ENCODE measurements at regions of chr20 and their contacts with region 1.

Region 1: DNA sequence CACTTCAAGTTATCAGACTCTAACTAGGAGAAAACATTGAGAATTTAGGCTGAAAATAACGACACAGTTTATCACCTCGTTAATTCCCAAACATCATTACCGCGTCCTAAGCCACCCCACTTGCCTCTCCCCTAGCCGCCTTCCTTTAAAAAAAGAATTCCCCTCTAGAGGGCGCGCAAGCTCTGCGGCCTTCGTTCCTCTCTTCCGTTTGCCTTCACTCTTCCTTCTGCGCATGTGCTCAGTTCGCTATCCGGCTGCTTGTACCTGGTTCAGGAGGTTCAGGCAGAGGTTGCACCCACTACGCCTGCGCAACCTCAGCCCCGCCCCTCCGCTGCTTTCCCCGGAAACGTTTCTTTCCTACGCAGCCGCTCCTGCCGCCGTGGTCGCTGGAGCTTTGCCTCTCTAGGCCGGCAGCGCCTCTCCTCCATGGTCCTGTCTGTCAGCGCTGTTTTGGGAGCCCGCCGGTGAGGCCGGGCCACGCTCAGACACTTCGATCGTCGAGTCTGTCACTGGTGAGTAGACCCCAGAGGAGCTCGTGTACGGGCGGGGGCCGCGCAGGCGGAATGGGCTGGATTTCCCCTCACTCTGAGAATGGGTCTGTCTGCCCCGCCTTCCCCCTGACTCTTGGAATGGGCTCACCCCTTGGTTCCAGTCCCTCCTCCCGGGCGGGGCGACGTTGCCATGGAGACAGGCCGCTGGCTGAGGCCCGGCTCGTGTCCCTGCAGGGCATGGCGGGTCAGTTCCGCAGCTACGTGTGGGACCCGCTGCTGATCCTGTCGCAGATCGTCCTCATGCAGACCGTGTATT is at the start of gene SYS1:
- DNase-seq: peak; percentile 98 to 99 (median 98)
- H3K4me3 ChIP-seq: peak within 1 kb of the TSS; percentile 59 to 92 (median 85)
- H3K27ac ChIP-seq: peak within 1 kb of the TSS; percentile 89 to 95
- H3K4me1 ChIP-seq: peaks cover 15 to 58% (median 44%) of the 10 kb centered on the region in 4 experiments
- H3K27me3 ChIP-seq: no peaks in the 10 kb centered on the region

Region 2: GRCh38 chr20:45347936-45348778 is 14.8 kb before region 1 on chr20 and contains the start of gene SDC4:
- CTCF ChIA-PET with region 1: interaction called, 27 read pairs
- POLR2A ChIA-PET with region 1: interaction called, 16 read pairs
- DNase-seq: peak; percentile 35 to 62 (median 57)
- H3K4me3 ChIP-seq: peak within 1 kb of the TSS; percentile 5 to 81 (median 59)
- H3K27ac ChIP-seq: peak within 1 kb of the TSS in 1 of 2 experiments; percentile 34
- H3K4me1 ChIP-seq: peaks cover 0 to 40% (median 34%) of the 10 kb centered on the region in 4 experiments
- H3K27me3 ChIP-seq: peaks cover 0 to 7% (median 0%) of the 10 kb centered on the region in 5 experiments

Region 3: GRCh38 chr20:45406259-45407066 is 43.5 kb after region 1 on chr20:
- CTCF ChIA-PET with region 1: interaction called, 16 read pairs
- POLR2A ChIA-PET with region 1: interaction called, 5 read pairs
- DNase-seq: peak in 2 of 3 donors; percentile 16 to 52
- H3K4me3 ChIP-seq: peak overlapping the region; percentile 60 to 87 (median 74)
- H3K27ac ChIP-seq: no peak overlapping the region
- H3K4me1 ChIP-seq: peaks cover 2 to 38% (median 34%) of the 10 kb centered on the region in 4 experiments
- H3K27me3 ChIP-seq: peaks cover 4 to 14% (median 9%) of the 10 kb centered on the region in 5 experiments

Measured in common myeloid progenitor, CD34-positive (primary cell).